ENCODE measurements at regions of chr12 and their contacts with region 1.

Region 1: DNA sequence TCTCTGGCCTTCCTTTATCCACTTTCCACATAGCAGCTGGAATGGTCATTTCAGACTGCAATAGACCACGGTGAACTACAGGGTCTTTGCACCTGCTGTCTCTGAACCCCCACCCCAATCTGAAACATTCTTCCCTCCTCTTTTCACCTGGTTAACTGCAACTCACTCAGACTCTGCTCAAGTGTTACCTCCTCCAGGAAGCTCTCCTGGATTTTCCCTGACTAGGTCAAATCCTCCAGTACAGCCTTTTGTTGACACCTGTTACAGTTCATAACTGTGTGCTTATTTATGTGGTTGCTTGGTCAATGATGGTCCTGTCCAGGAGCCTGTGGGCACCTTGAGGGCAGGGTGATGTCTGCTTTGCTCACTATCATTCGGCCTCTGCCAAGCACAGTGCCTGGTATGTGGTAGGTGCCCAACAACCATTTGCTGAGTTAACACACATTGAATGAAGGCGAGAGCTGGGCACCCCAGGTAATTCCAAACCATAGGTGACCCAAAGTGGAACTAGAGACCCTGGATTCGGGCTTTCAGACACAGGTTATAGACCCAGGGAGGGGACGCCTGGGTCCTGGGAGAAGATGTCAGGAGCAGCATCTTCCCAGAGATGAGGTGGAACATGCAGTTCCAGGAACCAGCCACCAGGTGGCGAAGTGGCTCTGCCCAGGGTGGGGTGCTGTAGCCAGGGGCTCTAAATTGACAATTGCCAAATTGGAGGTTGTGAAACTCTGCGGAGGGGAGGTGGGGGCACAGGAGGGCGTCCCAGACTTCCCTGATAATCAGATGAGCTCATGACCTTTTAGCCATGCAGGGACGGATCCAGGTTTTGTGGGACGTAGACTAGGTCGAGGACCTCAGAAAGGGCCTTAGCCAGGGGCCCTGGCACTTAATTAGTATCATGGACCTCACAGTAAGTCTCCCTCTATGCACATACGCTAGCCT is 28.1 kb downstream of the TRPV4 start:
- DNase-seq: peak; percentile 72 to 75
- H3K4me3 ChIP-seq: no peak overlapping the region
- H3K27ac ChIP-seq: no peak overlapping the region
- H3K4me1 ChIP-seq: peaks cover 0 to 5% (median 0%) of the 10 kb centered on the region in 4 donors
- H3K27me3 ChIP-seq: no peaks in the 10 kb centered on the region
- CTCF ChIP-seq: peak in 5 of 7 experiments; percentile 83 to 99 (median 97)
- EP300 ChIP-seq: no peak
- POLR2A ChIP-seq: no peak

Region 2: DNA sequence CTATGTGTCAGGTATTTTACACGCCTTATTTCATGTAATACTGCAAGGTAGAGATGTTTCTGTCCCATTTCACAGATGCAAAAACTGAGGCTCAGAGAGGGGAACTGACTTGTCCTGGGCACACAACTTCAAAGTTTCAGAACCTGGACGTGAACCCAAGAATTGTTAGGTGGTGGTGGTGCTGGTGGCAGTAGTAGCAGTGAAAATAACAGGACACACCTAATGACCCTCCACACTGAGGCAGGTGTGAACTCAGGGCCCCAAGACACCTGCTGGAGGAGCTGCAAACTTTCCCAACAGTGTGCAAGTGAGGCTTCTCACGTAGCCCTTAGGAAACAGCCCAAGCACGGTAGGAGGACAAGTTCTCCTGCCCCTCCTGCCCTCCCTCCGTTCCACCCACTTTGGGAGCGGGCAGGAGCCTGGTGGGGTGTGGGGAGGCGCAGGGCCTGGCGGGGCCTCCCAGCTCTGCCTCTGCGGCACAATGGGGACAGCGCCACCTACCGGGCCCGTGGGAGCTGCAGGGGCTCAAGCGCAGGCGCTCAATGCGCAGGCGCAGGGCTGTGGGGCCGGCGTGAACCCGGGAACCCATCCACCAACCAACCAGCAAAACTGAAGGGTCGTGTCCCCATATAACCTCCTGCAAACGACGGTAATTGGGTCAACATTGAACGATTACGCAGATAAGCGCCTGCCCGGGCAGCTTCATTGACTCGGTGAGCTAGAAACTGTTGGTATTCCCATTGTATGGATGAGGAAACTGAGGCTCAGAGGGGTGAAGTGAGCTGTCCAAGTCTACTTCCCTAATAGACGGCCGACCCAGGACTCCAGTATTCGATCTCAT is 40.1 kb after region 1 on chr12:
- intact Hi-C with region 1: loop called (anchors 5 kb)
- DNase-seq: peak; percentile 94 to 95
- H3K4me3 ChIP-seq: peak overlapping the region; percentile 16 to 28 (median 19)
- H3K27ac ChIP-seq: no peak overlapping the region
- H3K4me1 ChIP-seq: peaks cover 0 to 27% (median 8%) of the 10 kb centered on the region in 4 donors
- H3K27me3 ChIP-seq: no peaks in the 10 kb centered on the region
- CTCF ChIP-seq: peak in 5 of 7 experiments; percentile 94 to 98 (median 97)
- EP300 ChIP-seq: no peak
- POLR2A ChIP-seq: no peak

Region 3: DNA sequence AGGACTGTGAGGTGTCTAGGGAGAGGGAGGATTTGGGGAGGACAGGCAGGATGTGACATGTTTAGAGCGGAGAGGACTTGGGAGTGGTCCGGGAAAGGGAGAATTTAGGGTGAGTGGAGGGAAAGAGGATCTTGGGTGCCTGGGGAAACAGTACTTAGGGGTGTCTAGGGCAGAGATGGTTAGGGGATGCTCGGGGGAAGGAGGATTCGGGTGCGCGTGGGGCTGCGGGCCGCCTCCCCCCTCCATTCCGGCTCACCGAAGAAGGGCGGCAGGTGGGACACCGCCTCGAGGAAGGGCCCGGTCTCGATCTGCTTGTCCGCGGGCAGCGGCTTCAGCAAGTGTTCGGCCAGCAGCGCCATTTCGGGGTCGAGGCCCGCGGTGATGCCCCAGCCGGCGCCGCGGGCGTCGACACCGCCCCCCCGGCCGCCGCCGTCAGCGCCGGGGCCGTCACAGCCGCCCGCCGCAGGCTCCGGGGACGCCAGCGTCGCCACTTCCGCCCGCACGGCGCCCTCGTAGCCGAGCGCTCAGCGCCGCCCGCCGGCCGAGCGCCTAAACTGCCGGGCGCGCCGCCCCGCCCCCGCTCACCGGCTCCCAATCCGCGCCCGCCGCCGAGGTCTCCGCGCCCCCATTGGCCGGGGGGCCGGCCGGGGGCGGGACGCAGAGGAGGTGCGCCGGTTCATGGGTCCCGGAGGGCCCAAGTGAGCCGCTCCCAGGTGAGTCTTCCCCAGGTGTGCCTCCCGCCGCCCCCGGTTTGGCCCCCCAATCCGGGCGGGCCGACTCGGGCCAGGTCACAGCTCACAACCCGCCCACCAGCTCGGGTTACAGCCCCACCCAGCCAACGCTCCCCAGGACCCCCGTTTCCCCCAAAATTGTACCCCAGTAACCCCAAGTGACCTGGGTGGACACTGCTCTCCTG is 75.2 kb after region 1 on chr12 and contains the start of gene GLTP:
- intact Hi-C with region 1: loop called (anchors 10 kb)
- DNase-seq: peak; percentile 91 to 96
- H3K4me3 ChIP-seq: peak within 1 kb of the TSS; percentile 66 to 80 (median 77)
- H3K27ac ChIP-seq: peak within 1 kb of the TSS; percentile 69 to 89 (median 84)
- H3K4me1 ChIP-seq: peaks cover 30 to 47% (median 42%) of the 10 kb centered on the region in 4 donors
- H3K27me3 ChIP-seq: no peaks in the 10 kb centered on the region
- CTCF ChIP-seq: peak in 3 of 7 experiments; percentile 33 to 89 (median 48)
- EP300 ChIP-seq: no peak
- POLR2A ChIP-seq: no peak
- total RNA-seq, gene GLTP: 26.4 to 93.6 (median 60.7) TPM